ENCODE measurements at regions of chr10 and their contacts with region 1.

Region 1: GRCh38 chr10:16545116-16545736 is 23.5 kb upstream of the C1QL3 start:
- DNase-seq: no peak
- H3K4me3 Mint-ChIP-seq: no peak overlapping the region
- H3K27ac Mint-ChIP-seq: no peak overlapping the region
- H3K4me1 Mint-ChIP-seq: peaks cover 1% of the 10 kb centered on the region
- H3K27me3 Mint-ChIP-seq: peaks cover 17% of the 10 kb centered on the region

Region 2: GRCh38 chr10:15901889-15902288 is 643.3 kb before region 1 on chr10:
- CTCF ChIA-PET with region 1: interaction called, 11 read pairs
- POLR2A ChIA-PET with region 1: no interaction called
- DNase-seq: no peak
- H3K4me3 Mint-ChIP-seq: no peak overlapping the region
- H3K27ac Mint-ChIP-seq: no peak overlapping the region
- H3K4me1 Mint-ChIP-seq: no peaks in the 10 kb centered on the region
- H3K27me3 Mint-ChIP-seq: peaks cover 16% of the 10 kb centered on the region

Measured in activated CD4-positive, alpha-beta memory T cell treated with anti-CD3 and anti-CD28 coated beads, Interleukin-2, amount 10 ng/mL, durations not matched to agents 7 days and 5 days (primary cell).